WTC11 (cell line): ENCODE measurements at regions of chr2 and their contacts with region 1.

Region 1: DNA sequence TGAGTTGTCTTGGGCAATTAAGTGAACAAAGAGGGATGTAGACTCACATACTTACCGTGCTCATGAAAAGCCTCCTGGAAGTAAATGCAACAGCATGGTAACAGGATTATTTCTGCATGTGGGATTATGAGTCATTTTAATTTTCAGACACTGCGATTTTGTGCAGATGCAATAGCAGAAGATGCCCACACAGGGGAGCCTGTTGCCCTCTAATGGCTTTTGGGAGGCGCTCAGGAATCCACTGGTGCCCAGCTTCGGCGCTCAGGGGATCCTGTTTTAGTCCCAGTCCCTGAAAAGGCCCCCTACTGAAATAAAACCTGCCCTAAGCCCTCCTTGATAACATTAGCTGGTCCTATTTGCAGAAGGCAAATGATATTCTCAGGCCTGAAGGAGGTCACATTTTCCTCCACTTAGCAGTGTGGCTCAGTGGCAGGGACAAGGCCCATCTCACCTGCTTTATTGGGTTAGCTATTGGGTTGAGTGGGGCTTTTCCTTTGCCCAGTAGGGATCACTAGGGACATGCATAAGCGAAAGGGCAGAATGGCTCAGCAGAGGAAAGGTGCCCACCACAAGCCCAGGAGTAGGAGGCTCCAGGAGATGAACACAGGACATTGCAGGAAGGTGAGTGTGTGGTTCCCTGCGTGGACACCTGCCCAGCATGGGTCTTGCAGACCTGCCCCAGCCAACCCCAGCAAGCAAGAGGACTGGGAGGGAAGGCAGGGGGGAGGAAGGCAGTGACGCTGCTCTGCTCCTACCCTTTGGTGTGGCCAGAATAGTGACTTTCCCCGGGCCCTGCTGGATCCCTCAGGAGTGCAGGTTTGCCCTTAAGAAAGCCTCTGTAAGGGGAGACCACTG is 26.5 kb upstream of the KCNS3 start:
- DNase-seq: peak; percentile 72
- ATAC-seq: peak; percentile 82
- H3K4me3 Mint-ChIP-seq: no peak overlapping the region
- H3K27ac Mint-ChIP-seq: no peak overlapping the region
- H3K4me1 Mint-ChIP-seq: peaks cover 2% of the 10 kb centered on the region; the same call in 1 of the 2 replicates
- H3K27me3 Mint-ChIP-seq: no peaks in the 10 kb centered on the region
- CTCF ChIP-seq: peak; percentile 83

Region 2: GRCh38 chr2:17765408-17765807 is 86.5 kb before region 1 on chr2:
- CTCF ChIA-PET with region 1: no interaction called
- POLR2A ChIA-PET with region 1: no interaction called
- DNase-seq: no peak
- ATAC-seq: no peak
- H3K4me3 Mint-ChIP-seq: no peak overlapping the region
- H3K27ac Mint-ChIP-seq: no peak overlapping the region
- H3K4me1 Mint-ChIP-seq: no peaks in the 10 kb centered on the region
- H3K27me3 Mint-ChIP-seq: no peaks in the 10 kb centered on the region
- CTCF ChIP-seq: no peak

Region 3: DNA sequence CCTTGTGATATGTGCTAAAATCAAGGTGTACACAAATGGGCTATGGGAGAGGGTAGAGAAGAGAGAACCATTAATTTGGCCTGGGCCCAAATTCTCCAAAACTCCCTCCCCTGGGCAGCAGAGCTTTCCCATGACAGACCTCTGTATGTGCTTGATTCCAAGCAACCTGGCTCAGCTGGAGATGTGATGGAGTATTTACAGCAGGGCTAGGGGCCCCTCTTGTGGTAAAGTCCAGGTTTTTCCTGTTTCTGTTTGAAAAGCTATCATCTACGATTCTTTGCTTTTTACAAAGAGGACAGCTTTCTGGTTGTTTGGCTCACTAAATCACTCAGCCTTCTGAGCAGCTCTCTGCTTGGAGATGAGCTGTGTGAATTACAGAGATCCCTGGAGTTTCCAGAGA is 66.8 kb after region 1 on chr2:
- CTCF ChIA-PET with region 1: interaction called, 39 read pairs
- POLR2A ChIA-PET with region 1: no interaction called
- DNase-seq: peak; percentile 25
- ATAC-seq: peak; percentile 73
- H3K4me3 Mint-ChIP-seq: no peak overlapping the region
- H3K27ac Mint-ChIP-seq: peak overlapping the region; percentile 84; the same call in 1 of the 2 replicates
- H3K4me1 Mint-ChIP-seq: peaks cover 45% of the 10 kb centered on the region
- H3K27me3 Mint-ChIP-seq: no peaks in the 10 kb centered on the region
- CTCF ChIP-seq: no peak

Region 4: DNA sequence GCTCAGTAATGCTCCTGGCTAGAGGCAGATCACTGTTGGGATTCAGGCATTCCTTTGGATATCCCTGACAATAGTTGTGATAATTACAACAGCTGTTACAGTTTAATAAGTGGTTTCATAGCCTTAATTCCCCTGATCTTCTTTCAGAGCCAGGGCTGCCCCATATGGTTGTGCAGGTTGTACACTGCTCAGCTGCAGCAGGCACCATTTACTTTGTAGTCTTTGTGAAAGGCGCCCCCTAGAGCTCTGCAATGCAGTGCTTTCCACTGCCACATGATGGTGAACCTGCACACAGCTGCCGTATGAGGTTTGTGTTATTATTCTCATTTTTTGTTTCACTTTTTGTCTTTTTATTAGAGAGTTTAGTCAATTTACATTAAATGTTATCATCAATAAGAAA is 265.6 kb after region 1 on chr2:
- CTCF ChIA-PET with region 1: interaction called, 15 read pairs
- POLR2A ChIA-PET with region 1: no interaction called
- DNase-seq: peak; percentile 61
- ATAC-seq: peak; percentile 99
- H3K4me3 Mint-ChIP-seq: no peak overlapping the region
- H3K27ac Mint-ChIP-seq: no peak overlapping the region
- H3K4me1 Mint-ChIP-seq: no peaks in the 10 kb centered on the region
- H3K27me3 Mint-ChIP-seq: no peaks in the 10 kb centered on the region
- CTCF ChIP-seq: peak; percentile 74